ENCODE measurements at regions of chr3 and their contacts with region 1.

Region 1: GRCh38 chr3:23859016-23859743 is 53.4 kb downstream of the UBE2E1 start:
- H3K4me3 ChIP-seq: no peak overlapping the region
- H3K27ac ChIP-seq: no peak overlapping the region
- H3K4me1 ChIP-seq: peaks cover 7% of the 10 kb centered on the region
- CTCF ChIP-seq: no peak

Region 2: GRCh38 chr3:23726811-23727548 is 132.2 kb before region 1 on chr3:
- CTCF ChIA-PET with region 1: no interaction called
- POLR2A ChIA-PET with region 1: no interaction called
- H3K4me3 ChIP-seq: no peak overlapping the region
- H3K27ac ChIP-seq: no peak overlapping the region
- H3K4me1 ChIP-seq: no peaks in the 10 kb centered on the region
- CTCF ChIP-seq: no peak

Region 3: GRCh38 chr3:23836536-23837230 is 22.5 kb before region 1 on chr3:
- CTCF ChIA-PET with region 1: interaction called, 4 read pairs
- POLR2A ChIA-PET with region 1: interaction called, 10 read pairs
- H3K4me3 ChIP-seq: no peak overlapping the region
- H3K27ac ChIP-seq: no peak overlapping the region
- H3K4me1 ChIP-seq: peaks cover 12% of the 10 kb centered on the region; the same call in 1 of the 2 replicates
- CTCF ChIP-seq: no peak

Region 4: GRCh38 chr3:24012589-24013269 is 153.5 kb after region 1 on chr3:
- CTCF ChIA-PET with region 1: no interaction called
- POLR2A ChIA-PET with region 1: no interaction called
- H3K4me3 ChIP-seq: no peak overlapping the region
- H3K27ac ChIP-seq: no peak overlapping the region
- H3K4me1 ChIP-seq: no peaks in the 10 kb centered on the region
- CTCF ChIP-seq: no peak